H1 (cell line): ENCODE measurements at regions of chr22 and their contacts with region 1.

Region 1: DNA sequence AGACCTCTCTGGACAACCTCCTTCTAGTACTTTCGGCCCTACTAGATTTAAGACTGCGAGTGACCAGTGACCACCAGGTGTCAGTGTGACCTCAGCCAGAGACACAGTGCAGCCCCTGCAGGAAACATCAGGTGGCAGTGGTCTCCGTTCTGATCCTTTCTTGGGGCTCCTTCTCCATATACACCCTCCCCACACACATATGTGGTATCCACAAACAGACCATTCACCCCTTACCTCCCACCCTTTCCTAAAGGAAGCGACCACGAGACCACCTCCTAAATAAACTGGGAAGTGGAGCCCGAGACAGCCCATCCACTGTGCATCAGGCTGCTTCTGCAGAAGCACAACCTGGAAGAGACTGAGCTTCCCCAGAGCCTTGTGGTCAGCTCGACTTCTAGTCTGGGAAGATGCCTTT is 38.5 kb upstream of the CYP2D6 start:
- DNase-seq: peak; percentile 38 to 90
- H3K4me3 ChIP-seq: no peak overlapping the region
- H3K27ac ChIP-seq: no peak overlapping the region; the same call in 1 of the 2 replicates
- H3K4me1 ChIP-seq: peaks cover 0 to 5% (median 1%) of the 10 kb centered on the region in 4 experiments; a peak in 3 of 7 replicates
- H3K27me3 ChIP-seq: no peaks in the 10 kb centered on the region
- CTCF ChIP-seq: peak; percentile 99 to 100 (median 100)
- EP300 ChIP-seq: no peak
- POLR2A ChIP-seq: no peak
- RAD21 ChIP-seq: peak; percentile 99 to 100

Region 2: DNA sequence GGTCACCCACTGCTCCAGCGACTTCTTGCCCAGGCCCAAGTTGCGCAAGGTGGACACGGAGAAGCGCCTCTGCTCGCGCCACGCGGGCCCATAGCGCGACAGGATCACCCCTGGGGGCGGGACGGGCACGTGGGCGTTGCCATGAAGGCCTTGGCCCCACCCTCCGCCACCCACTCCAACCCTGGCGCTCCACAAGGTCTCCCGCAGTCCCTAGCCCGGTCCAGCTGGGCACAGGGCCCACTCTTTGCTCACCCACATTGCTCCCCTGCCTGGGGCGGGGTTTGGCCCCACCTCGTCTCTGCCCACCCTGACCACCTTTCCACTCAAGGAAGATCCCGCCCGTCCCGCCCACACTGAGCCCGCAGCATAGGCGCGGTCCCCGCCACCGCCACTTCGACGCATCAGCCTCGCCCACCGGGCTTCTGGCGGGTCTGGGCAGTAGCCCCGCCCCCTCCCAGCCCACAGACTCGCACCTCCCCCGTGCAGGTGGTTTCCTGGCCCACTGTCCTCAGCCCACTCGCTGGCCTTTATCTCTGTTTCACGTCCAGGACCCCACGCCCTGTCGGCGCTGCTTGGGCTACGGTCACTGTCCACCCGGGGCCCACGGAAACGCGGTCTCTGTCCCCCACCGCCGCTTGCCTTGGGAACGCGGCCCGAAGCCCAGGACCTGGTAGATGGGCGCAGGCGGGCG is 26.1 kb before region 1 on chr22:
- CTCF ChIA-PET with region 1: no interaction called
- POLR2A ChIA-PET with region 1: no interaction called
- DNase-seq: no peak
- H3K4me3 ChIP-seq: no peak overlapping the region
- H3K27ac ChIP-seq: no peak overlapping the region
- H3K4me1 ChIP-seq: no peaks in the 10 kb centered on the region
- H3K27me3 ChIP-seq: no peaks in the 10 kb centered on the region
- CTCF ChIP-seq: no peak
- EP300 ChIP-seq: no peak
- POLR2A ChIP-seq: no peak
- RAD21 ChIP-seq: no peak

Region 3: DNA sequence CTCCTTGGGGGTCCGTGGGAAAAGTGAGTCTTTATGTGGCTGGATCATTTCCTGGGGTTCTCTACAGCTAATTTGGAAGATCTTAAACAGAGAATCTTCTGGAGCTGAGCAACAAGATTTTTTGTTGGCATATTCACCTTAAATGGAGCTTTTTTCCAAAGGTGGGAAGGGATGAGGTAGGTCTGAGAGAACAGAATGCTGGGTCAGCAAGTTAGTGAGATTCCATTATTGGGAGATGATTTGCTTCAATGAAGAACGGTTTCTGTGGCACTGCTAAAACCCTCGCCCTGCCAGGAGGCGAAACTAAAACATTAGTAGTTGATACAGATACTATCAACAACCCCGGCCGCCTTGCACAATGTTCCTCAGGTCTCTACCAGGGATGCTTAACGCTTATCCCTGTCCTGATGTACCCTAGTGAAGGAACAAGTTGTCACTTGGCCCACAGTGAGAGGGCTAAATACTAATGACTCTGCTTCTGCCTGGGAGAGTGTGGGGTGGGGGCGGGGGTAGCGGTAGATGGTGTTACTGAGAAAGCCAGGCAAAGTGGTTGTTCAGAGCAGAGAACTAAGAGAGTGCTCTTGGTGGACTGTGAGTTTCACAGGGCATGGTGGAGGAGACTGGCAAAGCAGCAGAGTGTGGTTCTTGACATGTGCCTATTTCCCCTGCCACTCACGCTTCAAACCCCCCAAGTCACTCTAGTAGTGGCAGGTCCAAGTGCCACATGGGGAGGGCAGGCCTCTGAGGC is 25.2 kb after region 1 on chr22:
- CTCF ChIA-PET with region 1: interaction called, 15 read pairs
- POLR2A ChIA-PET with region 1: interaction called, 3 read pairs
- DNase-seq: no peak
- H3K4me3 ChIP-seq: no peak overlapping the region
- H3K27ac ChIP-seq: no peak overlapping the region
- H3K4me1 ChIP-seq: peaks cover 0 to 5% (median 3%) of the 10 kb centered on the region in 4 experiments; a peak in 6 of 7 replicates
- H3K27me3 ChIP-seq: no peaks in the 10 kb centered on the region
- CTCF ChIP-seq: no peak
- EP300 ChIP-seq: no peak
- POLR2A ChIP-seq: no peak
- RAD21 ChIP-seq: no peak

Region 4: DNA sequence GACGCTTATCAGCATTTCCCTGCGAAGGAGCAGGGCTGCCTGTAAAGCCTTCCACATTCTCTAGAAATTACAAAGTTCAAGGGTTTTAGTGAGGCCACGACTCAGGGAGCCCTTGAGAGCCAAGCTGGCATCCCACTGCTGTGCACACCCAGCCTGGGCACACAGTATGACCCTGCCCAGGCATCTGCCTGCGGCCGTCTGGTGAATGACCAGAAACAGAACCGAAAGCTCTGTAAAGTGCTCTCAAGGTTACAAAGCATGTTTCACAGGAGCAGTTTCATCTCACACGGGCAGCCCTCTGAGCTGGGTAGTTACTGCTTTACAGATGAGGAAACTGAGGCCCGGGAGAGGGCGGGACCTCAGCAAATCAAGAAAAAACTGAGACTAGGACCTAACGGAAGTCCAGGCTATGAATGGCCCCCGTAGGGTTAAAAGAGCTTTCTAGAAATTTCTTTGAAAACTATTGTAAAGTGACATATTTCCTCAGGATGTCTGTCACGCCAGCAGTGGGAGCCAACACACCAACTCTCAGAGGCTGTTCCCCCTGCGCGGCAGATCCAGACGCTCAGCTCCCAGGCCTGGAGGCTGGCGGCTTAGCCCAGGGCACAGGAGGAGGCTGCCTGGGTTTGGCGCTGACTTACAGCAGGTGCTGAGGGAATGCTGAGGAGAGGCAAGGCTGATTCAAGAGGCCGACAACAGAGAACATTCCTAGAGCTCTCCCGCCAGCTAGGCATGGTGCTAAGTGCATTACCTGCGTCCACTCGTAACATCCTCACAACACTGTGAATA is 109.1 kb after region 1 on chr22:
- CTCF ChIA-PET with region 1: interaction called, 16 read pairs
- POLR2A ChIA-PET with region 1: interaction called, 4 read pairs
- DNase-seq: no peak
- H3K4me3 ChIP-seq: no peak overlapping the region
- H3K27ac ChIP-seq: no peak overlapping the region
- H3K4me1 ChIP-seq: peaks cover 29 to 43% (median 30%) of the 10 kb centered on the region in 4 experiments
- H3K27me3 ChIP-seq: peaks cover 0 to 43% (median 27%) of the 10 kb centered on the region in 4 experiments; a peak in 5 of 7 replicates
- CTCF ChIP-seq: peak in 2 of 3 experiments; percentile 18 to 25; a peak in 2 of 4 replicates
- EP300 ChIP-seq: no peak
- POLR2A ChIP-seq: no peak
- RAD21 ChIP-seq: peak; percentile 58 to 67

Region 5: DNA sequence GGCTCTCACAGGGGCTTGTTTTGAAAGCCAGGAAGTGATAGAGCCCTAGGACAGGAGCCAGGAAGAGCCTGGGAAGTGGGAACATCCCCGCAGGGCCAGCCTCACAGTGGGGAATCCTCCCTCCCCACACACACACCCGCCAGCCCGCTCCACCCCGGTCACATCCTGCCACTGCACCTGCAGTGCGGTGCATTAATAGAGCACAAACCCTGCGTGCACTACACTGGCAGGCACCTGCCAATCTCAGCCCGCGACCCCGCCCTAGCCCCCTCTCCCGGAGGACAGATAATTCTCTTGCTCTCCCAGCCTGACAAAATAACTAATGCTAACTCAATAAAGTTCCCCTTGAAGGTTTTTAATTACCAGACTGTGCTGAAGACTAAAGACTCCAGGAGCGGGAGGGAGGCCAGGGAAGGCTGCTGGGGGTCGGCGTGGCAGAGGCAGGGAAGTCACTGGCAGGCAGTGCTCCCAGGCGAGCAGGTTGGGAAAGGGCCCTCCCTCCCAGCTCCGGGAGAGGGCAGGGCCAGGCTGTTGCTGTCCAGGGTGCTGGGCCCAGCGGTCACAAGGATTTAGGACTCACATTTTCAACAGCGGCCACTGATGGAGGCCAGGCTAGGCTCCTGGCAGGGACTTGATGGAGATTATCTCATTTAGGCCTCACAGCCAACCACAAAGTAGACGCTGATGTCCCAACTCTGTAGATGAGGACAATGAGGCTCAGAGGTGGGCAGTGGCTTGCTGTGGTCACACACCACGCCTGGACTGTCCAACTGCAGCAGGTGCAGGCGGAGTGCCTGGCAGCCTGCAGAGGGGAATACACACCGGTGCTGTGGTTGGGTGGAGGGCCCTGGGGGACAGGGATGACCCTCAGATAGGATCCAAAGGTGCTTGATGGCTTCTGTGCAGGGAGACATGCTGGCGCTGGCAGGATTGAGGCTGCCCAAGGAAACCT is 125.2 kb after region 1 on chr22:
- CTCF ChIA-PET with region 1: interaction called, 18 read pairs
- POLR2A ChIA-PET with region 1: no interaction called
- DNase-seq: peak in 1 of 2 experiments; percentile 92
- H3K4me3 ChIP-seq: peak overlapping the region in 1 of 4 experiments; percentile 26; a peak in 1 of 8 replicates
- H3K27ac ChIP-seq: no peak overlapping the region
- H3K4me1 ChIP-seq: peaks cover 14 to 58% (median 37%) of the 10 kb centered on the region in 4 experiments
- H3K27me3 ChIP-seq: peaks cover 0 to 2% (median 0%) of the 10 kb centered on the region in 4 experiments; a peak in 4 of 7 replicates
- CTCF ChIP-seq: no peak
- EP300 ChIP-seq: no peak
- POLR2A ChIP-seq: no peak
- RAD21 ChIP-seq: peak; percentile 2 to 33; a peak in 2 of 4 replicates

Region 6: DNA sequence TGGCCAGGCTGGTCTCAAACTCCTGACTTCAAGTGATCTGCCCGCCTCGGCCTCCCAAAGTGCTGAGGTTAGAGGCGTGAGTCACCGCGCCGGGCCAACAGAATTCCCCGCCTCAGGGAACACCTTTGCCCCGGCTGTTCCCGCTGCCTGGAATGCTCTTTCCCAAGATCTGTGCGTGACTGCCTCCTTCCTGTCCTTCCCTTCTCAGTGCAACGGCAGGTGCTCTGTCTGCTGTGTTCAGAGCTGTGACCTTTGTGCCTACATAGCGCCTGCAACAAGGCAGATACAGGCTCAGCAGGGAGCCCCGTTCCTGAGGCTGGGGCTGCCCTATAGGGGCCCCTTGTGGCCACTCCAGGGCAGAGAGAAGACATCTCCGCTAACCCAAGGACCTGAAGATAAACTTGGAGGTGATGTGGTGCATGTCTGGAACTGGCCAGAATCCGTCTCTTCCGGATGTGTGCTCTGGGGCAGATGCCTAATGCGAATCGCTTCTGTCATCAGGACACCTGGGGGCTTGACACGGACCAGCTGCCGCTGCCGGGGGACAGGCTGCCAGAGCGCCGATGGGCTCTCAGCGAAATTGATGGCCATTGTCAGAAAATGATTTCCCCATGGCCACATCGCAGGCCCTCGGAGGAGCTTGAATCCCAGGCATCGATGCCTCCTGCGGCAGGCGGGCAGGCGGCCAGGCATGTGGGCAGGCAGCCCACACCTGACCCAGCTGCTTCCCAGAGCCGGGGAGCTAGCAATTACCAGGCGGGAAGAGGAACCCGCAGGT is 144.9 kb after region 1 on chr22:
- CTCF ChIA-PET with region 1: interaction called, 19 read pairs
- POLR2A ChIA-PET with region 1: no interaction called
- DNase-seq: peak; percentile 72 to 78
- H3K4me3 ChIP-seq: no peak overlapping the region
- H3K27ac ChIP-seq: no peak overlapping the region
- H3K4me1 ChIP-seq: peaks cover 0 to 34% (median 19%) of the 10 kb centered on the region in 4 experiments; a peak in 5 of 7 replicates
- H3K27me3 ChIP-seq: no peaks in the 10 kb centered on the region; a peak in 2 of 7 replicates
- CTCF ChIP-seq: peak; percentile 72 to 77 (median 75)
- EP300 ChIP-seq: no peak
- POLR2A ChIP-seq: no peak
- RAD21 ChIP-seq: peak; percentile 79 to 86

Region 7: DNA sequence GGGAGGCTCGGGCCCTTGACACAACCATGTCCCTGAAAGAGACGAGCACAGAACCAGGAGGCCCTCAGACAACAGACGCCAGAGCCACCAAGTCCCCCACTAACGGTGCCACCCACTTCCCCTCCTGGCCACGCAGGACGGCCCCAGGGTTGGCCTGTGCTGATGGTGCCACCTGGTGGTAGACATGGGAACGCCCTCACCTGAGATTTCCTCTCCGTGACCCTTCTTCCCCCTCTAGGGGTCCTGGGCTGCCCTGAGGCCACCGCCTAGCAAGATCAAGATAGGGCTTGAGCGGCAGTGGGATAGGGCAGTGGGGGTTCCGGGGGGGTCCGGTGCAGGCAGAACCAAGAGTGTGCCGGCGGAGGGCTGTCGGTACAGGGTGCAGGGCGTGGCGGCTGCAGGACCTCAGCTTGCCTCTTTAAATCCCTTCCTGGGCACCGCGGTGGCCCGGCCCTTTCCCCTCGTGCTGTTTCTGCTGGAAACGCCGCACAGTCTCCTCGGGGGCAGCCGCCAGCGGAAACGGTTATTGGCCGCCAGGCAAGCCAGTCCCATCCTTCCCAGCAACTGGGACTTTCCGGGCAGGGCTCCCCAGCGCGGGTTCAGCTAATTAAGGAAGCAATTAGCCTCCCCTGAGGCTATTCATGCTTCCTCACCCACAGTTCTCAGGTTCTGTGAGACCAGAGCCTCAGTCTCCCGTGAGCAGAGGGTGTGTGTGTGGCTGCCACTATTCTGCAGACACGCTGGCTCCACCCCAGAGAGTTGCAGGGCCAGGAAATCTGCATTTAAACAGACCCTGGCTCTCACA is 268.6 kb after region 1 on chr22:
- CTCF ChIA-PET with region 1: interaction called, 41 read pairs
- POLR2A ChIA-PET with region 1: interaction called, 4 read pairs
- DNase-seq: peak in 1 of 2 experiments; percentile 92
- H3K4me3 ChIP-seq: peak overlapping the region; percentile 62 to 80 (median 72)
- H3K27ac ChIP-seq: no peak overlapping the region
- H3K4me1 ChIP-seq: peaks cover 6 to 29% (median 17%) of the 10 kb centered on the region in 4 experiments
- H3K27me3 ChIP-seq: peaks cover 0 to 3% (median 2%) of the 10 kb centered on the region in 4 experiments; a peak in 3 of 7 replicates
- CTCF ChIP-seq: peak; percentile 96 to 98 (median 96)
- EP300 ChIP-seq: no peak
- POLR2A ChIP-seq: no peak
- RAD21 ChIP-seq: peak; percentile 96 to 98